ENCODE measurements at regions of chr12 and their contacts with region 1.

Region 1: DNA sequence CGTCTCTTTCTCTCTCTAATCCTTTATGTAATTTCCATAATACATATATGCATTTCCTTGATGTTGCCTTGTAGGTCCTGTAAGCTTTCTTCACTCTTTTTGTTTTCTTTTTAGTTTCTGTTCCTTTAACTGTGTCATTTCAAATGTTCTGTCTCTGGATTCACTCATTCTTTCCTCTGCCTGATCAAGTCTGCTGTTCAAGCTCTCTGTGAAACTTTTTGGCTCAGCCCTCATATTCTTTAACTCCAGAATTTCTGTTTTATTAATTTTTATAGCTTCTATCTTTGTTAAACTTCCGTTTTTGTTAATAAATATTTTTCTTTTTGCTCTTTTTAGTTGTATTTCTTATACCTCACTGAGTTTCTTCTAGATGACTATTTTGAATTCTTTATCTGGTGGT is 321.3 kb upstream of the LMO3 start:
- H3K4me3 ChIP-seq: no peak overlapping the region
- H3K27ac ChIP-seq: no peak overlapping the region
- H3K4me1 ChIP-seq: no peaks in the 10 kb centered on the region
- CTCF ChIP-seq: no peak

Region 2: GRCh38 chr12:16939871-16940306 is 12.6 kb after region 1 on chr12:
- CTCF ChIA-PET with region 1: interaction called, 16 read pairs
- POLR2A ChIA-PET with region 1: no interaction called
- H3K4me3 ChIP-seq: no peak overlapping the region
- H3K27ac ChIP-seq: no peak overlapping the region
- H3K4me1 ChIP-seq: no peaks in the 10 kb centered on the region
- CTCF ChIP-seq: 0 out of 2 replicates have a peak, but pooled peaks have one; percentile 20

Region 3: DNA sequence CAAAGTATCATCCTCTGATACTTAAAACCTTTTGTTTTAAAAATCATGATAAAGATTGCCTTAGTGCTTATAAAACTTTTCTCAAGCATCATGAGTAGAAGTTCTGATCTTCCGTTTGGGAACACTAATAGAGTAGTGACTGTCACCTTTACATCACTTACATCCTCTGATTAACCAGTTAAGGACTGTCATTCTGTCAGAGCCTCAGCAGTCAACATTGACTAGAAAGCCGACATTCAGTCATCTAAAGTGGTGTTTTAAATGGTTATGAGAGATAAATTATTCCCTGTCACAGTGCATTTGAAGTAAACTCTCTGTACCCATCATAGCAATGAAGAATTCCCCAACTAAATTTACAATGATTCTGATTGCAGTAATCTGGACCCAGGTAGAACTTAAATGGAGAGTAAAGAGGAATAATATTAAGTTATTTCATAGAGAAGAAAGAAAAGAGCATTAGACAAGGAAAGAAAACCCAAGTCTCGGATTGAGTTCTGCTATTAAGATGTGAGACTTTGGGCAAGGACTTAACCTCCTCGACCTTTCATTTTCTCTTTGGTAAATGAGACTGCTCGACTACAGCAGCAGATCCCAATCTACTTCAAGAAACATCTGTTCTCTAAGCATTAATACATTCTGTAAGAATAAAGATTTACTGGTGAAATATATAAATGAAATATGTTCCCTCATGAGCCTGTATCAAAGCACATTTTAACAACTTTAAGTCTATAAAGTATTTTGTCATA is 242.6 kb after region 1 on chr12:
- CTCF ChIA-PET with region 1: no interaction called
- POLR2A ChIA-PET with region 1: no interaction called
- H3K4me3 ChIP-seq: no peak overlapping the region
- H3K27ac ChIP-seq: no peak overlapping the region
- H3K4me1 ChIP-seq: no peaks in the 10 kb centered on the region
- CTCF ChIP-seq: no peak

Measured in HEK293 (cell line).